HEK293 (cell line): ENCODE measurements at regions of chr6 and their contacts with region 1.

Region 1: DNA sequence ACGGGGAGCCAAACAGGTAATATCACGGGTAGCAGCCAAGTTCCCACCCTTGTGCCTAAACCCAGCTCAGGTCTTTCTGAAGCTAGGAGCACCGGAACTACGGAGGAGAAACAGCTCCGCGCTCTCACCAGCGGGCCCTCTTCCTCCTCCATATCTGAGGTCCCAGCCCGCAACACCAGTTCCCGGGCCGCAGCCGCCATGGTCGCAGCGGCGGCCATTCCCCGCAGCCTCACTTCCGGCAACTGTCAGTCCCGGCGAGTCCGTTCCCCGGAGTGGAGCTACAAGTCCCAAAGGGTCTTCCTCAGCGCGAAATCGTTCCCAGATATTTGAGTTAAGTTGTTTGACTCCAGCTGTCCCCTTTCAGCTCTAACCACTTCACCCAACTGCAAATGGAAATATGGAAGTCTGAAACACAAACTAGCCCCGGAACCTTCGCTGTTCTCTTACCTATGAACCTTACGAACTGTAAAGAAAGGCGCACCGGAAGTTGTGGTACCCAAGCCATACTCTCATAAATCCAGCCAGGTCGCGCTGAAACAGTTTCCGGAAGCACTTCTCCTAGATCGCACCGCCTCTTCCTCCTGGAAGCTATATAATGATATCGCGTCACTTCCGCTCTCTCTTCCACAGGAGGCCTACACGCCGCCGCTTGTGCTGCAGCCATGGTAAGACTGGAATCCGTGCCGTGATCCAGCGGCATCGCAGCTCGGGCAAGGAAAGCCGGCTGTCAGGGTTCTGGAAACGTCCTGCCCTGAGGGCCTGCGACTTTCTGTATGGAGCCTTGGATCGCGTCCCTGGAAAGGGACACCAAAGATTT is at the starts of genes RPS18 and VPS52:
- H3K4me3 ChIP-seq: peak within 1 kb of the TSS; percentile 77
- H3K27ac ChIP-seq: peak within 1 kb of the TSS; percentile 99
- H3K4me1 ChIP-seq: peaks cover 27% of the 10 kb centered on the region
- CTCF ChIP-seq: peak; percentile 49; the same call in 1 of the 2 replicates

Region 2: GRCh38 chr6:33200219-33201146 is 71.2 kb before region 1 on chr6 and contains the starts of genes RXRB and SLC39A7:
- CTCF ChIA-PET with region 1: interaction called, 3 read pairs
- POLR2A ChIA-PET with region 1: interaction called, 12 read pairs
- H3K4me3 ChIP-seq: peak within 1 kb of the TSS; percentile 75
- H3K27ac ChIP-seq: peak within 1 kb of the TSS; percentile 98
- H3K4me1 ChIP-seq: peaks cover 23% of the 10 kb centered on the region
- CTCF ChIP-seq: no peak

Region 3: GRCh38 chr6:33288921-33289748 is 17.5 kb after region 1 on chr6 and contains the starts of genes PFDN6 and WDR46:
- CTCF ChIA-PET with region 1: interaction called, 22 read pairs
- POLR2A ChIA-PET with region 1: interaction called, 92 read pairs
- H3K4me3 ChIP-seq: peak within 1 kb of the TSS; percentile 79
- H3K27ac ChIP-seq: peak within 1 kb of the TSS; percentile 44
- H3K4me1 ChIP-seq: peaks cover 11% of the 10 kb centered on the region; the same call in 1 of the 2 replicates
- CTCF ChIP-seq: no peak

Region 4: DNA sequence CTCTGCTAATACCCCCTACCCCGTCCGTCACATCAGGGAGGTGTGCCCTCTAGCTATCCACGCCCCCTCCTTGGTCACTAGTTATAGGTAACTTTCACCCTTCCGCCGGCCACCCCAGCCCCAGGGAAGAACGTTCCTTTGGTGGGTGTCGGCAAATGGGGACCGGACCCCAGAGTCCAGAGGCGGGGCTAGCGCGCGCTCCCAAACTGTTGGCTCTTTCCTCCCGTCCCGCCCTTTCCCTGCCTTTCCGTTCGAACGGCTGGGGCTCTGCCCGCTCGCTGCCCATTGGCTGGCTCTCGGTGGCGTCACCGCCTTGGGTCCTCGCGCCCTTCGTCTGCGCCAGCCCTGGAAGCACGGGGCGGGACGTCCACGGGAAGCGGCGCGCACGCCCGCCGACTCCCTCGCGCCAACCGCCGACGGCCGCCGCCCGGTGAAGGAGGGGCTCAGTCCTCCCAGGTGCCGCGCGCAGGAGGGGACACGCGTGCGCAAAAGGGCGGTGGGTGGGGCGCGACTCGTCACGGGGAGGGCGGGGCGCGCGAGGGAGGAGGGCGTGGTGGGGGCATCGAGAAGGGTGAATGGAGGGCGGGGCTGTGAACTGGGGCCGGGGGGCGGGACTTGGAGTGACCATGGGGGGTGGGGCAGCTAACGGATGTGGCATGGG is 138.5 kb after region 1 on chr6:
- CTCF ChIA-PET with region 1: no interaction called
- POLR2A ChIA-PET with region 1: interaction called, 11 read pairs
- H3K4me3 ChIP-seq: peak overlapping the region; percentile 74
- H3K27ac ChIP-seq: peak overlapping the region; percentile 50
- H3K4me1 ChIP-seq: peaks cover 4% of the 10 kb centered on the region; the same call in 1 of the 2 replicates
- CTCF ChIP-seq: no peak

Region 5: DNA sequence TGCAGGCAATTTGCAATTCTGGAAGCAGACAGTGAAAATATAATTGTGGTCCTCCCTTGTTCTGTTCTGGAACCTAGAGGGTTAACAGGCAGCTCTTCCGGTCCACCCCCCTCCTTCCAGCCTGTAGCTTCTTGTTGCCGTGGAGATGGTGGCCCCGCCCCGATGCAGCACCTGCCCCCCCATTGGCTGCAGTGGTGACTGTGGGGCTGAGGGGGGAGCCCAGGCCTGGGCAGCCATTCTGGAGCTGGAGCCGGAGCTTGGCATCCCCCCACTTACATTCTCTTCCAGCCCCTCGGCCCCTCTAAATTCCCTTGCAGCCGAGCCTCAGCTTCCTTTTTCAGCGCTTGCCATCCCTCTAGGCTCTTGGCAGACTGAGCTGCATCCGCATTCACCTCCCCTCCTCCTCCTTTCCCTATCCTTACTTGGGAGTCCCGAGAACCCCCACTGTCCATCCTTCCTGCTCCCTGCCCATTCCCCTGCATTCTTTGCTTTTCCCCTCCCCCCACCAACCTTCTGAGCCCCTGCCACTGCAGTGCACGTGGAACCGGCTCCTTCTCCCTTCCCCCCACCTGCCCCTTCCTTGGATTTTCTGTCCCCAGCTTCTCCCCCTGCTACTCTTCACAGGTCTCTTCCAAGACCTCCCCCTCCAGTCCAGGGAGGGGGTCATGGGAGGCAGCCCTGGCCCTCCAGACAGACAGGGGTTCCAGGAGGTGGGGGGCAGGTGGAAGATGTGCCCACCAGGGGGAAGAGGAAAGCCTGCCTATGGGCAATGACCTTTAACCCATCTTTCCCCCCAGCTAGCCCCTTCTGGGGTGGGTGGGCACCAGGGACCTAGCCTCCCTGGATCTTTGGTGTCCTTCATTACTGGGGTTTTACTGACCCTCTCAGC is 159.6 kb after region 1 on chr6:
- CTCF ChIA-PET with region 1: interaction called, 14 read pairs
- POLR2A ChIA-PET with region 1: interaction called, 18 read pairs
- H3K4me3 ChIP-seq: no peak overlapping the region
- H3K27ac ChIP-seq: no peak overlapping the region
- H3K4me1 ChIP-seq: peaks cover 10% of the 10 kb centered on the region
- CTCF ChIP-seq: no peak